ENCODE measurements at regions of chr2 and their contacts with region 1.

Region 1: GRCh38 chr2:237060534-237061312 is 25.0 kb upstream of the COPS8 start:
- DNase-seq: peak in 39 of 42 donors; percentile 29 to 84 (median 57)

Region 2: DNA sequence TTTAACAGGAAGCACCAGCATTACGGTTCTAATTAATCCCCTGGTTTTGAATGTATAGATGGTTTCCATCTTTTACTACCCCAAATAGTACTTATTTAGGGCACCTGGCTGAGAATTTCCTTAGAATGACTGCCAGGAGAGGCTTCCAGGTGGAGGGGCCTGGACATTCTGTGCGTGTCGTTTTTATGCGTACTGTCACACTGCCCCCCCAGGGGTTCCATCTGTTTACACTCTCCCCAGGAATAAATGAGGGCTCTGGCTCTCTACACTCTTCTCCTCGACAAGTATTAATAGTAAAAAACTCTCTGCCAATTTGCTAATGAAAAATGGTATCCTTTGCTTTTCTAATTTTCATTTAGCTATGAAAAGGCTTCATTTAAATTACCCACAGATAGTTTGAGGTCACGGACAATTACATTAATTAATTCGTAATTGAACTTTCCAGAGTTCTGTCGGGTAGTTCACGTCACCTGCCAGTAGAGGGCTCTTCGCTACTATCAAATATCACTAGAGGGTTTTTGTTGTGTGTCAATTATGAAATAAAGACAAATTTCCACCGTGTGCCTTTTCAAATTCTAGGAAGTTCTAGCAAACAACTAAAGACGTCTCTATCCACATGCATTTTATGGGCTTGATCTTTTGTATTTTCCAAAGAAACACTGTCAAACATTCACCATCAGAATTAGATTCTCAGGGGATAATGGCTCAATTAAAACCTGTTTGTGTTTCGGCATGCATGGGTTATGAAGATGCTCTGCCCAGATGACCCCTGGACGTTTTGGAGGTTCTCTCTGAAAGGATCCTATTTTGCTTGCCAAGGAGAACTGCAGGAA is 707.7 kb before region 1 on chr2:
- intact Hi-C with region 1: loop called (anchors 5 kb)
- DNase-seq: peak in 7 of 42 donors; percentile 15 to 71 (median 42)

Measured in head of caudate nucleus (tissue), 42 donors.